Activated CD8-positive, alpha-beta T cell treated with anti-CD3 and anti-CD28 coated beads for 36 hours (primary cell): ENCODE measurements at regions of chr5 and their contacts with region 1.

Region 1: DNA sequence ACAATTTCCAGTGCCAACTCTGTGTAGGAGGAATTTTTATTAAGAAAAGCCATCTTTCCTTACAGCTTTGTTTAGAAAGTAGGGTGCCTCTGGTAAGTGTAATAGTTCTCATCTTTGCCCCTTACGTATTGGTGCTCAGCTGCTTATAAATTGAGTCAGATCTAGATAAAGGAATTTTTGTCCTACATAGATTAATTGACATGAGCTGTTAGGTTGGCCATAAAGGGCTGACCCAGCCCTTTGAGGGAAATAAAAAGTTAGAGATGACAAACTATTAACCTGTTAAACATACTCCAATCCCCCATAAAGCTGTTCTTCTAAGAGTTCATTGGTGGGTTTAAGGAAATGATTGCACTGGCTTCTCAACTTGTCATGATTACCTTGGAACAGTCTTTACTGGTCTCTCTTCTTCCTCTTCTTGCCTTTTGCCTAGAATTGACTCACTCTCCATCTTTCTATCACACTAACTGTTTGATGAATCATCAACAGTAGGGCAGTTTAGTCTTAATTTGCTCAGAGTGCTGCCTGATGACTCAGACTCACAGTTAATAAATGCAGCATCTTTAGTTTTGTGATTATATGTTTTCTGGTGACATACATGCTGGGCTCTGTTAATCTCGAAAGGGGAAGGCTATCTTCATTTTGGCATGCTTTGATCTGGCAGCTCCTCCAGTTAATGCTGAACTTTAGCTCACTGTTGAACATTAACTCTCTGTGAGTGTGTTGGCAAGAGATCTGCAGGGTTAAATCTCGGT is 51.7 kb downstream of the ARHGAP26 start:
- DNase-seq: peak; percentile 37
- ATAC-seq: peak; percentile 93
- H3K4me3 Mint-ChIP-seq: no peak overlapping the region
- H3K27ac Mint-ChIP-seq: peak overlapping the region; percentile 70
- H3K4me1 Mint-ChIP-seq: peaks cover 81% of the 10 kb centered on the region
- H3K27me3 Mint-ChIP-seq: no peaks in the 10 kb centered on the region
- CTCF ChIP-seq: no peak

Region 2: DNA sequence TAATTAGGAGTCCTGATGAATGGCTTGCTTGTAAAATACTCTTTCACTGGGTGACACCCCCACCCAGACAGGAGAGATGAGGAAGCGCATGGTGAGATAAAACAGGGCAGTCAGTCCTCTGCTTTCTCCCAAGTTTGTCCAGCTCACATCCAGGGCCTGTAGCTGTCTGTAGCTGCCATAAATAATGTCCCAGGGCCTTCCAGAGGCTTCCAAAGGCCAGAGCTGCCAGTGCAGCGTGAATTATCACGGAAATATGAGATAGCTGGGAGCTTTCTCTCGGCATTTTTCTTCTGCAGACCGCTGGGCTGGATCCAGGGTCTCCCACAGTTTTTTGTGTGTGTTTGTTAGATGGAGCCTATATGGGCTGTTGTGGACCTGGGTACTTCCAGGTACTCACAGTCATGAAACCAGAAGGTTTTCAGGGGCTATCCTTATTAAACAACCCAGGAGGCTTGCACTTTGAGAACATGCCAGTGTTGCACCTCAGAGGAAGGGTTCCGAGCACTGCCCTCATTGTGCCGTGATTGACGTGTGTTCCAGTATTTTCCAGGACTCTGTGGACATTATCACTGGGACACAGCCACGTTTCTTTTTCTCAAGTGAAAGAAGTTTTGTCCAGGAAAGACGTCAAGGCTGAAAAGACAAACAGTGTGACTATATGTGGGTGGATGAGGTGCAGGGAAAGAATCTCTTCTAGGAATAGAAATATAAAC is 253.5 kb before region 1 on chr5:
- CTCF ChIA-PET with region 1: no interaction called
- POLR2A ChIA-PET with region 1: no interaction called
- intact Hi-C with region 1: no loop called
- DNase-seq: no peak
- ATAC-seq: no peak
- H3K4me3 Mint-ChIP-seq: no peak overlapping the region
- H3K27ac Mint-ChIP-seq: no peak overlapping the region
- H3K4me1 Mint-ChIP-seq: no peaks in the 10 kb centered on the region
- H3K27me3 Mint-ChIP-seq: peaks cover 1% of the 10 kb centered on the region
- CTCF ChIP-seq: no peak

Region 3: DNA sequence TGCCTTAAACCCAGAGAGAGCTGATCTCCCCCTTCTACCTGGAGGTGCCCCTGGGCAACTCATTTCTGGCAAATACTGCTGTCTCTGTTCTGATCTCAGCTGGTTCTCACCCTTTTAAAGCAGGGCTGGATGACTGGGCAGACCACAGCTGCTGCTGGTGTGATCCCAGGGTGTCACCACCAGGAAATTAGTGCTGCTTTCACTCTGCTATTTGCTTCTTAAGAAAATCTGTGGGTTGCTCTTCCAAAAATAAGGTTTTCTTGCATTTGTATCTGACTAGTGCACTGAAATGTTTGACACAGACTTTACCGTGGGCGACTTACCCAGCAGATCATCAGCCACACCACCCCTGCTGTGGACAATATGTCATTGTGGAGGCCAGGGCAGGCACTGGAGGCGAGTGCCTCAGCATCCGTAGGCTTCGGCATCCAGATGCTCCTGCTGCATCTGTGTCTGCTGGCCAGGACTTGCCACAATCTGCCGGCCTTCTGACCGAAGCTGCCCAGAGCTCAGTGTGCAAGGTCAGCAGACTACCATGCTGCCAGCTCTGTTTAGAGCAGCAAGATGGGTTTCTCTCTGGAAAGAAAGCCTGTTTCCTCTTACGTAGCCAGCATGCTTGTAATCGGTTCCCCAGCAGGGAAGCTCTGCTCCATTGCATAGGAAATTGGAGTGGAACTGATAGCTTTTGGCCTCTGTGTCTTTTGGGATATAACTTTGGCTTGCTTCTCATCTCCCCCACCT is 38.1 kb before region 1 on chr5:
- CTCF ChIA-PET with region 1: interaction called, 5 read pairs
- POLR2A ChIA-PET with region 1: interaction called, 7 read pairs
- intact Hi-C with region 1: loop called (anchors 1 kb)
- DNase-seq: peak; percentile 90
- ATAC-seq: peak; percentile 87
- H3K4me3 Mint-ChIP-seq: peak overlapping the region; percentile 58
- H3K27ac Mint-ChIP-seq: peak overlapping the region; percentile 84
- H3K4me1 Mint-ChIP-seq: peaks cover 72% of the 10 kb centered on the region
- H3K27me3 Mint-ChIP-seq: no peaks in the 10 kb centered on the region
- CTCF ChIP-seq: no peak

Region 4: GRCh38 chr5:142860270-142860669 is 38.4 kb after region 1 on chr5:
- CTCF ChIA-PET with region 1: no interaction called
- POLR2A ChIA-PET with region 1: no interaction called
- intact Hi-C with region 1: loop called (anchors 5 kb)
- DNase-seq: no peak
- ATAC-seq: no peak
- H3K4me3 Mint-ChIP-seq: no peak overlapping the region
- H3K27ac Mint-ChIP-seq: no peak overlapping the region
- H3K4me1 Mint-ChIP-seq: peaks cover 53% of the 10 kb centered on the region
- H3K27me3 Mint-ChIP-seq: no peaks in the 10 kb centered on the region
- CTCF ChIP-seq: no peak

Region 5: GRCh38 chr5:143448518-143448917 is 626.6 kb after region 1 on chr5:
- CTCF ChIA-PET with region 1: no interaction called
- POLR2A ChIA-PET with region 1: no interaction called
- intact Hi-C with region 1: no loop called
- DNase-seq: peak; percentile 44
- ATAC-seq: peak; percentile 57
- H3K4me3 Mint-ChIP-seq: no peak overlapping the region
- H3K27ac Mint-ChIP-seq: no peak overlapping the region
- H3K4me1 Mint-ChIP-seq: peaks cover 23% of the 10 kb centered on the region
- H3K27me3 Mint-ChIP-seq: no peaks in the 10 kb centered on the region
- CTCF ChIP-seq: no peak